ENCODE measurements at regions of chr9 and their contacts with region 1.

Region 1: DNA sequence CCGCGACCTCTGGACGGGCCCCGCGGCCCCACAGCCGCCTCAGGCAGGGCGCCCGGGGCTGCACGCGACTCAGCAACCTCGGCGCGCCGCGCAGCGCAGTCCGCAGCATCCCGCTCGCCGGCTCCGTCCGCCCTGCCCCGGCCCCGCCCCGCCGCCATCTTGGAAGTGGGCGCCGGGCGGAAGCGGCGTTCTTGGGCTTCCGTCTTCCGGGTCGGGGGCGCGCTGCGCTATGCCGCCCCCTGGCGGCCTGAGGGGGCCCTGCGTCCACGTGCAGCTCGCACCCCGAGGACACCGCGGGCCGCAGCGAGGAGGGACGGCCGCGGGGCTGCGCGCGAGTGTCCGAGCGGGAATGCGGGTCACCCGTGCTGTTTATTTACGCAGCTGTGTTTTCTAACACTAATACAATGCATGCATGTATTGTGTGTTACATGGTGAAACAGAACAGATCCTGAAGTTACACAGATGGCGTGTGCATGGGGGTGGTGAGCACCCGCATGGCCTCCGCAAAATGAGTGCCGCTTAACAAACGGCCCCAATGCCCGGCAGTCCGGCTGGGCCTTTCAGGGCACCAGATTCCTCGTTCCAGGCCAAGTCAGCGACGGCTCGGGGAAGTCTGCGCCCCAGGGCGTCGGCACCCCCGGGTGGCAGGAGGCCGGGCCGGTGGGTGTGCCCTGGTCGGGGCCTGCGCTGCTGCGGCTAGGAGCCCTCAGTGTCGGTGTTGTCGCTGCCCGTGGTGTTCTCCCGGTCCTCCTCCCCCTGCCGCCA is at the start of gene DNLZ:
- DNase-seq: peak; percentile 90
- ATAC-seq: peak; percentile 69
- H3K4me3 Mint-ChIP-seq: peak within 1 kb of the TSS; percentile 86
- H3K27ac Mint-ChIP-seq: peak within 1 kb of the TSS; percentile 87
- H3K4me1 Mint-ChIP-seq: peaks cover 9% of the 10 kb centered on the region
- H3K27me3 Mint-ChIP-seq: no peaks in the 10 kb centered on the region
- CTCF ChIP-seq: peak; percentile 84
- total RNA-seq, gene DNLZ: 27.1 and 28.9 TPM in 2 replicates

Region 2: DNA sequence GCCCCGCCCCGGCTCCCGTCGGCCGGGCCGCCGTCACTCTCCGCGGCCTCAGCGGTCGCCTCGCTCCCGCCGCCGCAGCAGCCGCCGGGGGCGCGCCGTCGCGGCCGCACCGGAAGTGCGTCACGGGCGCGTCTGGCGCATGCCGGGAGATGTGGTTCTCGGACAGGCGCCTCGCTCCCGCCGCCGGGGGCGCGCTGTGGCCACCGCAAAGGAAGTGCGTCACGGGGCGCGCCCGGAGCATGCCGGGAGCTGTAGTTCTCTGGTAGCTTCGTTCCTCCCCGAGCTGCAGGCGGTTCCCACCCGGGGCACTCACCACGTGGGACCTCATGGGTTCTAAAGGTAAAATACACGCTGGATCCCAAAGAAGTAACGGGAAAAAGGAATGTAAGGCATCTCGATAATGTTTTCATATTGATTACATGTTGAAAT is 402.5 kb before region 1 on chr9 and contains the start of gene UBAC1:
- CTCF ChIA-PET with region 1: no interaction called
- POLR2A ChIA-PET with region 1: no interaction called
- intact Hi-C with region 1: loop called (anchors 1 kb)
- DNase-seq: peak; percentile 99
- ATAC-seq: peak; percentile 91
- H3K4me3 Mint-ChIP-seq: peak within 1 kb of the TSS; percentile 87
- H3K27ac Mint-ChIP-seq: peak within 1 kb of the TSS; percentile 76
- H3K4me1 Mint-ChIP-seq: peaks cover 29% of the 10 kb centered on the region
- H3K27me3 Mint-ChIP-seq: peaks cover 9% of the 10 kb centered on the region
- CTCF ChIP-seq: no peak
- total RNA-seq, gene UBAC1: 24.3 and 25.5 TPM in 2 replicates

Region 3: DNA sequence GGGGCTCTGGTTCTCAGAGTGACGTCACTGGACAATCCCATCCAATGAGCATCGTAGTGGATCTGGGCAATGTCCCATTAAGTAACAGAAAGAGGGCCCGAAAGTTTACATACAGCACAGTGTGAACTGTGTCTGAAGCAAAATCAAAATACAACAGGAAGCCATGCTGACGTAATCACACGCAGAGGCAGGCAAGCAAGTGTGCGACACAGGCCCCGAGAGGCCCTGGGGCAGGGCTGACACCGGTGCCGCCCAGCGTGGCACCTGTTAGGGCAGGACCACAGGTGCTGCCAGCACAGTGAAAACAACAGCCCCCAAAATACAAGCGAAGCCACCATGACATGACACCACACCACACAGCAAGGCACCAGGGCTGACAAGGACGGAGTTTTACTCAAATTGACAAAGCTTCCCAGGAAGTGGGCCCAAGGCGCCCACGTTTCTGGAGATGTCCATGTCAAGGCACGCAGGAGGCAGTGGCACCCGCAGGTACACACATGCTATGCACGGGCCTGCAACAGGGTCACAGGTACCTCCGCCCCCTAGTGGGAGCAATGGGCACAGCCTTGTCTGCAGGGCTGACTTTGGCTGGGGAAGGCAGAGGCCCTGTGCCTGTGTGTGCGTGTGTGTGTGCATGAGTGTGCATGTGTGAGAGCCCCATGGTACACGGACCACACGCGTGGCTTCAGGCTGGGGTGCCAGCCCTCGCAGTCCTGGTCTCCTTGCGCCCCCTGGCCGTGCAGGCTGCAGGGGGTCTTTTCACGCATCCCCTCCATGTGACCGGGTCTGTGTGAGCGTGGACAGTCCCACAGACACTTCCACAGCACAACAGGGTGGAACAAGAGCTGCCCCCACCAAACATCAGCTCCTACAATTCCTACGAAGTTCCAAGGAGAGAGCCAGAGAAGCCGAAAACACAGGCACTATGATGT is 137.8 kb before region 1 on chr9:
- CTCF ChIA-PET with region 1: no interaction called
- POLR2A ChIA-PET with region 1: interaction called, 4 read pairs
- intact Hi-C with region 1: loop called (anchors 1 kb)
- DNase-seq: peak; percentile 70
- ATAC-seq: peak; percentile 78
- H3K4me3 Mint-ChIP-seq: peak overlapping the region; percentile 79
- H3K27ac Mint-ChIP-seq: peak overlapping the region; percentile 98
- H3K4me1 Mint-ChIP-seq: peaks cover 80% of the 10 kb centered on the region
- H3K27me3 Mint-ChIP-seq: no peaks in the 10 kb centered on the region
- CTCF ChIP-seq: peak; percentile 30

Region 4: DNA sequence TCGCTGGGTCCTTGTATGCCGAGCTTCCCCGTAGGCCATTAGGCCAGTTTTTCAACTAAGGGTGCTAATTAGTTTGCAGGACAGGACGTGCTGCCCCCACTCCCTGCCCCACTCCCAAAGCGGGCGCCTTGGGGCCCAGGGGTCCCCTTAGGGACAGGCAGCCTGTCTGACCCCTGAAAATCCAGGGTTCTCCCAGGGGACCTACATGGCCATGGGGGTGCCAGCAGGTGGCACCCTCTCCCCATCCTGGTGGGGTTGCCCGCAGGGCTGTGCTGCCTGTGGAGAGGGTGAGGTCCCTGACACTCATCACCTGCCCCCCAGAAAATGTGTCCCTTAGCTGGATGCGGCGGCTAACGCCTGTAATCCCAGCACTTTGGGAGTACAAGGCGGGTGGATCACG is 51.4 kb before region 1 on chr9:
- CTCF ChIA-PET with region 1: interaction called, 4 read pairs
- POLR2A ChIA-PET with region 1: interaction called, 9 read pairs
- intact Hi-C with region 1: loop called (anchors 1 kb)
- DNase-seq: no peak
- ATAC-seq: no peak
- H3K4me3 Mint-ChIP-seq: no peak overlapping the region
- H3K27ac Mint-ChIP-seq: no peak overlapping the region
- H3K4me1 Mint-ChIP-seq: peaks cover 7% of the 10 kb centered on the region
- H3K27me3 Mint-ChIP-seq: peaks cover 2% of the 10 kb centered on the region
- CTCF ChIP-seq: no peak

Region 5: GRCh38 chr9:136339173-136339957 is 24.4 kb before region 1 on chr9:
- CTCF ChIA-PET with region 1: no interaction called
- POLR2A ChIA-PET with region 1: interaction called, 3 read pairs
- intact Hi-C with region 1: loop called (anchors 2 kb)
- DNase-seq: peak; percentile 54
- ATAC-seq: peak; percentile 61
- H3K4me3 Mint-ChIP-seq: no peak overlapping the region
- H3K27ac Mint-ChIP-seq: no peak overlapping the region
- H3K4me1 Mint-ChIP-seq: peaks cover 5% of the 10 kb centered on the region
- H3K27me3 Mint-ChIP-seq: no peaks in the 10 kb centered on the region
- CTCF ChIP-seq: no peak

Region 6: GRCh38 chr9:136410500-136411287 is 46.9 kb after region 1 on chr9 and contains the starts of genes ENTR1 and PMPCA:
- CTCF ChIA-PET with region 1: no interaction called
- POLR2A ChIA-PET with region 1: interaction called, 19 read pairs
- intact Hi-C with region 1: no loop called
- DNase-seq: peak; percentile 98
- ATAC-seq: peak; percentile 87
- H3K4me3 Mint-ChIP-seq: peak within 1 kb of the TSS; percentile 92
- H3K27ac Mint-ChIP-seq: peak within 1 kb of the TSS; percentile 90
- H3K4me1 Mint-ChIP-seq: peaks cover 41% of the 10 kb centered on the region
- H3K27me3 Mint-ChIP-seq: no peaks in the 10 kb centered on the region
- CTCF ChIP-seq: no peak
- total RNA-seq, gene ENTR1: 89.4 and 101 TPM in 2 replicates
- total RNA-seq, gene PMPCA: 67.2 and 75.3 TPM in 2 replicates

Region 7: GRCh38 chr9:136482793-136483588 is 119.2 kb after region 1 on chr9 and contains the start of gene SEC16A:
- CTCF ChIA-PET with region 1: no interaction called
- POLR2A ChIA-PET with region 1: interaction called, 3 read pairs
- intact Hi-C with region 1: loop called (anchors 1 kb)
- DNase-seq: peak; percentile 99
- ATAC-seq: peak; percentile 78
- H3K4me3 Mint-ChIP-seq: peak within 1 kb of the TSS; percentile 98
- H3K27ac Mint-ChIP-seq: peak within 1 kb of the TSS; percentile 97
- H3K4me1 Mint-ChIP-seq: peaks cover 34% of the 10 kb centered on the region
- H3K27me3 Mint-ChIP-seq: no peaks in the 10 kb centered on the region
- CTCF ChIP-seq: no peak
- total RNA-seq, gene SEC16A: 74.0 and 78.8 TPM in 2 replicates

Measured in activated B cell treated with CpG ODN at 0.5 μM for 24 hours (primary cell).